H1 (cell line): ENCODE measurements at regions of chr16 and their contacts with region 1.

Region 1: GRCh38 chr16:69100071-69100691 is 5.3 kb upstream of the HAS3 start:
- DNase-seq: no peak
- H3K4me3 ChIP-seq: no peak overlapping the region
- H3K27ac ChIP-seq: no peak overlapping the region
- H3K4me1 ChIP-seq: peaks cover 15 to 27% (median 19%) of the 10 kb centered on the region in 4 experiments
- H3K27me3 ChIP-seq: no peaks in the 10 kb centered on the region; a peak in 1 of 7 replicates
- CTCF ChIP-seq: no peak
- EP300 ChIP-seq: no peak
- POLR2A ChIP-seq: no peak
- RAD21 ChIP-seq: no peak

Region 2: DNA sequence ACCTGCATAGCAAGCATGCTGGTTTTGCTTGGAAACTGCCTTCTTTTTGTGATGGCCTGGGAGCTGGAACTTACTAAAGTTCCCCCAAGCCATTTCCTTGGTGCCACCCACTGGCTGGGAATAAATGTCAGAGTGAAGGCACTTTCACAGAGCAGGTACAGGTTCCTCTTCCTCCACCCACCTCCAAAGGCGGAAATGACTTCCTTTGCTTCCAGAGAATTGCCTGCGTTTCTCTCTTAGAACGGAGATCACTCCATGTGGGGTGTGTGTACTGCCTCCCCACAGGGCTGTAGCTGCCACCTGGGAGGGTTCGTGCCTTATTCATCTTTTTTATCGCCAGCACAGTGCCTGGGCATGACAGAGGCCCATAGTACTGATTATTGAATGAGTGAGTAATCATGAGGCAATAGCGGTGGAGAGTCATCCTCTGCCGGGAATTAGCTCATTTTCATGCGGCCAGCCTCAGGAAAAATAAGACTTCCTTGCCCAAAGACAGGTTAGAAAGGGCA is 27.0 kb before region 1 on chr16:
- CTCF ChIA-PET with region 1: interaction called, 5 read pairs
- POLR2A ChIA-PET with region 1: interaction called, 11 read pairs
- DNase-seq: no peak
- H3K4me3 ChIP-seq: 0 out of 8 replicates have a peak overlapping the region, but pooled peaks of 1 of the 4 experiments have one; percentile 23
- H3K27ac ChIP-seq: no peak overlapping the region
- H3K4me1 ChIP-seq: peaks cover 6 to 28% (median 26%) of the 10 kb centered on the region in 4 experiments
- H3K27me3 ChIP-seq: no peaks in the 10 kb centered on the region
- CTCF ChIP-seq: no peak
- EP300 ChIP-seq: no peak
- POLR2A ChIP-seq: no peak
- RAD21 ChIP-seq: no peak

Region 3: GRCh38 chr16:69123910-69124309 is 23.7 kb after region 1 on chr16:
- CTCF ChIA-PET with region 1: interaction called, 10 read pairs
- POLR2A ChIA-PET with region 1: interaction called, 38 read pairs
- DNase-seq: no peak
- H3K4me3 ChIP-seq: no peak overlapping the region
- H3K27ac ChIP-seq: no peak overlapping the region
- H3K4me1 ChIP-seq: no peaks in the 10 kb centered on the region
- H3K27me3 ChIP-seq: no peaks in the 10 kb centered on the region
- CTCF ChIP-seq: peak in 2 of 3 experiments; percentile 68; a peak in 3 of 4 replicates
- EP300 ChIP-seq: no peak
- POLR2A ChIP-seq: no peak
- RAD21 ChIP-seq: peak; percentile 81 to 85

Region 4: DNA sequence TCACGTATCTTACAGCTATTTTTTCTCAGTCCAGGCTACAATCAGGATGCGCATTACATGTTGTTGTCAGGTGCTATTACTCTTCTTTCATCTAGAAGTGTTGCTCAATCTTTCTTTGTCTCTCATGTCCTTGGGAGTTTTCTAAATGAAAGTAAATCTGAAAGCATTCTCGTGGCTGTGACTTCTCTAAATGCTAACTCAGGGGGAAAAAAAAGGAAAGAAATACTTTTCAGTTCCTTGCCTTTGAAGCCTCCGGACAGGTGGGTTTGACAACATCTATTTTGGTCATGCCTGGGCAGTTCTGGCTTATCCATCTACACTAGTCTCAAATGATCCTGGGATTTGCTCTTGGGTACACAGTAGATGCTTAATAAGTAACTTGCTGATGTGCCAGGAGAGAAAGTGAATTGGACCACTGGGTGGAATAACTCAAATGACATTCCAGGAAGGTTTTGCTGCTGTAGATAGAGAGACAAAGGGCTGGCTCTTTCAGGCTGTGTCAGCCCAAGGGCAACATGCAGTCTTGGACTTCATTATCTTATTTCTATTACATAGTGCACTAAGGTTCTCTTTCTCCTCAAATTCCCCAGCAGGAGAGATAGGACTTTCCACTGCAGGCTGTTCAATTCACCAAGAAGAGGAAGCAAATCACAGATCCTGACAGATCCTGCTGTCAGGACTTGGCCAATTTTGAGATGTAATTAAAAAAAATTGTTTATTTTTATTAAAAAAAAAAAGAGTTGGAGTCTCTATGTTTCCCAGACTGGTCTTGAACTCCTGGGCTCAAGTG is 402.0 kb after region 1 on chr16:
- CTCF ChIA-PET with region 1: no interaction called
- POLR2A ChIA-PET with region 1: no interaction called
- DNase-seq: no peak
- H3K4me3 ChIP-seq: no peak overlapping the region
- H3K27ac ChIP-seq: no peak overlapping the region
- H3K4me1 ChIP-seq: no peaks in the 10 kb centered on the region; a peak in 1 of 7 replicates
- H3K27me3 ChIP-seq: no peaks in the 10 kb centered on the region
- CTCF ChIP-seq: no peak
- EP300 ChIP-seq: no peak
- POLR2A ChIP-seq: no peak
- RAD21 ChIP-seq: no peak